Activated T-helper 1 cell treated with anti-CD3 and anti-CD28 coated beads, Interleukin-12 subunit alpha, Interleukin-12 subunit beta, Interleukin-2, Interleukin-4 antibody, amounts not matched to agents 30 ng/mL and 10 ng/mL and 1 ng/mL, durations not matched to agents 14 hours and 24 hours and 36 hours (primary cell): ENCODE measurements at regions of chr10 and their contacts with region 1.

Region 1: DNA sequence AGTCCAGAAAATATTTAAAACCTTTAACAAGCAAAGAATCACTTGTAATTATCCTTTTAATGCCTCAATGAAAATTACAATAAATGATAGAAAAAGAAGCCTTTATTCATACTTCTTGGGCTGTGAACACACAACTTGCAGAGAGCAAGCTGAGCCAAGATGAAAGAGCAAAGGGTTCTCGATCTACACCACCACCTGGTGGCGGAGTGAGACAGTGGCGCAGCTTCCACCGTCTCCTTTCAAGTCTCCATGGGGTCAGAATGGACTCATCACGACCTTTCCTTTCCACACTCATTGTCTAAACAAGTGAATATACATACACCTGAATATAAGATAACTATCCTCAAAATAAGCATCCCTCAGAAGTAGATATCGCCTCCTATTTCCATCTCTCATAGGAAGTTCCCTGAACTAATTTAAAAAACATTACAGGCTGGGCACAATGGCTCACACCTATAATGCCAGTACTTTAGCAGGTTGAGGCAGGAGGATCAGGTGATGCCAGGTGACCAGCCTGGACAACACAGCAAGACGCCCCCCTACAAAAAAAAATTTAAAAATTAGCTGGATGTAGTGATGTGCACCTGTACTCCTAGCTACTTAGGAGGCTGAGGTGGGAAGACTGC is 40.7 kb downstream of the ATE1 start:
- DNase-seq: peak; percentile 3
- H3K4me3 Mint-ChIP-seq: no peak overlapping the region
- H3K27ac Mint-ChIP-seq: no peak overlapping the region
- H3K4me1 Mint-ChIP-seq: no peaks in the 10 kb centered on the region
- H3K27me3 Mint-ChIP-seq: no peaks in the 10 kb centered on the region

Region 2: GRCh38 chr10:121823993-121824463 is 63.1 kb before region 1 on chr10:
- intact Hi-C with region 1: loop called (anchors 1 kb)
- DNase-seq: no peak
- H3K4me3 Mint-ChIP-seq: no peak overlapping the region
- H3K27ac Mint-ChIP-seq: no peak overlapping the region
- H3K4me1 Mint-ChIP-seq: no peaks in the 10 kb centered on the region
- H3K27me3 Mint-ChIP-seq: no peaks in the 10 kb centered on the region